Aorta (tissue), 5 donors: ENCODE measurements at regions of chr14 and their contacts with region 1.

Region 1: DNA sequence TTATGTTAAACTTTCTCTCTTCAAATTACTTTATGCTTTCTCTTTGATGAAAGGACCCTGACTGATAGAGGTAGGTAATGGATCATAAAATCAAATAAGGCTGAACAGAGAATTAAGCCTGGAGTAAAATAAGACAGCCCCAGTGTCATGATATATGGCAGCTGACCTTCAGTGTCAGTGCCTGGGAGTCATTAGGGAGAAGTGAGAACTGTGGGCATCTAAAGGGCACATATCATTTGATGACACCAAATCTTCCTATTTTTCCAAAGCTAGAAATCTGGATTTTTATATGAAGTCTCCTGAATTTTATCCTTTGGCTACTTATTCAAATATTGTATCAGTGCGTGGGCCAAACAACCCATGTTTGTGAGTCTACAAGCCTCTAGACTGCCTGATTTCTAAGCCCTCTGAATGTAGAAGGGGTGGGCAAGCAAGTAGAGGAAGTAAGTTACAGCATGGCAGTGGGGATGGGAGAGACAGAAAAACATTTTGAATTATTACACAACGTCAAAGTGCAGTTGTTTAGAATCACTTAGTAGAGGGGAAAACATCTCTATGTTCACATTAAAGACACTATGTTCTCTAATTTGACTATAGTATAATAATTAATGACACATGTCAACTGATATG is 10.0 kb downstream of the SLC39A9 start:
- DNase-seq: no peak
- ATAC-seq: no peak
- H3K4me3 ChIP-seq: no peak overlapping the region
- H3K27ac ChIP-seq: no peak overlapping the region
- H3K4me1 ChIP-seq: no peaks in the 10 kb centered on the region
- H3K27me3 ChIP-seq: no peaks in the 10 kb centered on the region

Region 2: DNA sequence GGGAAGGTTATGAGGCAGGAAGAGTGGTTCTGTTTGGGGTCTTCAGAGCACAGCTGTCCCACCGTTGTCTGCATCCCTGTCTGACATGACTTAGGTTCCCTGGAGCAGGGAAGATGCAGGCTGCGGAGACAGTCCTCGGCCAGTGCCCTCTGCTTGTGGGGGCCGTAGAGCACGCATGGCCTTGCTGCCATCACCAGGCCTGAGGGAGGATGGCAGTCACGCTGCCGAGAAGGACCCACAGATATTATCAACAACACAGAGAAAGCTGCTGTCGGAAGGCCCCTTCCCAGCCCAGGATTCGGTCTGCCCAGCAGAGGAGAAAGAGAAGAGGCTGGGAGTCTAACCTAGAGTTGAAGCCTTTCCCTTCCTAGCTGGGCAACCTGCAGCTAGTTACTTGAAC is 45.4 kb before region 1 on chr14:
- intact Hi-C with region 1: no loop called
- DNase-seq: no peak
- ATAC-seq: peak; percentile 72
- H3K4me3 ChIP-seq: no peak overlapping the region
- H3K27ac ChIP-seq: no peak overlapping the region
- H3K4me1 ChIP-seq: no peaks in the 10 kb centered on the region
- H3K27me3 ChIP-seq: no peaks in the 10 kb centered on the region

Region 3: DNA sequence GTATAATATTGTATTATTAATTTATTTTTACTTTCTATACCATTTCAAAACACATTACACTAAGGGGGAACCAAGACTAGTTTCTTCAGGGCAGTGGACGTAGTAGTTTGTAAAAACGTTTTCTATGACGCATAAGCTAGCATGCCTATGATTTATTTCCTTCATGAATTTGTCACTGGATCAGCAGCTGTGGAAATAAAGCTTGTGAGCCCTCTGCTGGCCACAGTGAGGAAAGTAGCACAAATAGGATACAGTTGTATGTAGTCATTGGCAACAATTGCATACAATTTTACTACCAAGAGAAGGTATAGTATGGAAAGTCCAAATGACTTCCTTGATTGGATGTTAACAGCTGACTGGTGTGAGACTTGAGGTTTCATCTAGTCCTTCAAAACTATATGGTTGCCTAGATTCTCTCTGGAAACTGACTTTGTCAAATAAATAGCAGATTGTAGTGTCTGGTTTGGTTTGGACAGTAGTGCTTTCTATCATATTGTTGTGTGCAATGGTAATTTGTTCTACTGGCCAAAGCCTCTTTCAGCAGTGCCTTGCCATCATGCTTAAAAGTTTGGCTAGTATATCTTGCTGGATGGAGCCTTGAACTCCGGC is 51.8 kb after region 1 on chr14:
- intact Hi-C with region 1: loop called in 1 of 2 experiments (anchors 10 kb)
- DNase-seq: peak in 1 of 2 donors; percentile 70
- ATAC-seq: peak; percentile 91
- H3K4me3 ChIP-seq: no peak overlapping the region
- H3K27ac ChIP-seq: no peak overlapping the region
- H3K4me1 ChIP-seq: no peaks in the 10 kb centered on the region
- H3K27me3 ChIP-seq: no peaks in the 10 kb centered on the region